Breast epithelium (tissue), 4 donors: ENCODE measurements at regions of chr4 and their contacts with region 1.

Region 1: GRCh38 chr4:89563431-89563830 is 255.8 kb upstream of the GPRIN3 start:
- DNase-seq: no peak
- H3K4me3 ChIP-seq: no peak overlapping the region
- H3K27ac ChIP-seq: no peak overlapping the region
- H3K4me1 ChIP-seq: no peaks in the 10 kb centered on the region
- H3K27me3 ChIP-seq: no peaks in the 10 kb centered on the region
- CTCF ChIP-seq: no peak
- POLR2A ChIP-seq: no peak

Region 2: DNA sequence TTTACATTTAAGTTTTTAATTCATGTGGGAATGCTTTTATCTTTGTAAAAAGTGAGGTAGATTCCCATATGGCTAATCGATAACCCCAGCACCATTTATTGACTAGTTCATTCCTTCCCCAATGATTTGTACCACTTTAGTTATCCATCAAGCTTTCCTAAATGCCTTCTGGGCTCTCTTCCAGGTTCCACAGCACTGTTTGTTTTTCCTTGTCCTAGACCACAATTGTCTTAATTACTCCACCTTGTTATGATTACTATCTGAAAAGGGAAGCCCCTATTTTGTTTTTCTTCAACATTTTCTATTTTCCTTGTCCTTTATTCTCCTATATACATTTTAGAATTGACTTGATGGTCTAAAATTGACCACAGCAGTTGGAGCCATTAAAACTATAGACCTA is 207.3 kb before region 1 on chr4:
- intact Hi-C with region 1: no loop called
- DNase-seq: no peak
- H3K4me3 ChIP-seq: no peak overlapping the region
- H3K27ac ChIP-seq: no peak overlapping the region
- H3K4me1 ChIP-seq: no peaks in the 10 kb centered on the region
- H3K27me3 ChIP-seq: no peaks in the 10 kb centered on the region
- CTCF ChIP-seq: no peak
- POLR2A ChIP-seq: no peak

Region 3: DNA sequence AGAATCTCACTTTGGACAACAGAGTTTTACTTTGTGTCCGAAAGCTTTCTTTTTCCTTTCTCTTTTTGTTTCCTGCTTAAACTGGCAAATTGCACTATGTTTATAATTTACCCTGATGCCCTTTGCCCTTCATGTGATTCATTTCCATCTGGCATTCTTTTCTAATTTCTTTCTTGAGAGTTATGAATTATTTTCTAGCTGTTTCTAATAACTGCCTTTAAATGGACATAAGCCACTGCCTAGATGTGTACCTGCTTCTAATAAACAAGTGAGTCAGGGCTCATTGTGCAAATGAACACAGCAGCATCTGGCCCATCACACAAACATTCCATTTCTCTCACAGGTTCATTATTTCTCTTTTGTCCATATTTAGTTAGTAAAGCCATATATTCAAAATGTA is 13.5 kb before region 1 on chr4:
- intact Hi-C with region 1: no loop called
- DNase-seq: no peak
- H3K4me3 ChIP-seq: no peak overlapping the region
- H3K27ac ChIP-seq: no peak overlapping the region
- H3K4me1 ChIP-seq: no peaks in the 10 kb centered on the region
- H3K27me3 ChIP-seq: no peaks in the 10 kb centered on the region
- CTCF ChIP-seq: no peak
- POLR2A ChIP-seq: no peak

Region 4: DNA sequence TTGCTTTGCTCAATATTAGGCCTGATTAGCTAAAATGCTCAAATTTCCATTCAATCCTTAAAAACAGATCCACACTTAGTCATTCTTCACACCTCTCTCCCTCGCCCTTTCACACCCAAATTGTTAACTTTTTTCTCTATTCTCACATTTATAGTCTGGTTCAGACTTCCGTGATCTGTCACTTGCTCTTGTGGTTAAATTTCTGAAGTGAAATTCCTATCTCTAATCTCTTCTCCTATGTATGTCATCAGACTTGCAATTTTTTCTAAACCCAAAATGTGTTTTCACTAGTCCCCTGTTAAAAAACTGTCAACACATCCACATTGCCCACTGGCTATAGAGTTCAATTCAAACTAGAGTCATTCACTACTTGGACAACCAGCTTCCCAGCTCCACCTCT is 210.4 kb after region 1 on chr4:
- intact Hi-C with region 1: loop called (anchors 10 kb)
- DNase-seq: no peak
- H3K4me3 ChIP-seq: no peak overlapping the region
- H3K27ac ChIP-seq: no peak overlapping the region
- H3K4me1 ChIP-seq: no peaks in the 10 kb centered on the region
- H3K27me3 ChIP-seq: no peaks in the 10 kb centered on the region
- CTCF ChIP-seq: no peak
- POLR2A ChIP-seq: no peak

Region 5: GRCh38 chr4:89939994-89940393 is 376.6 kb after region 1 on chr4:
- intact Hi-C with region 1: no loop called
- DNase-seq: no peak
- H3K4me3 ChIP-seq: no peak overlapping the region
- H3K27ac ChIP-seq: no peak overlapping the region
- H3K4me1 ChIP-seq: no peaks in the 10 kb centered on the region
- H3K27me3 ChIP-seq: no peaks in the 10 kb centered on the region
- CTCF ChIP-seq: no peak
- POLR2A ChIP-seq: no peak